Activated CD4-positive, alpha-beta memory T cell treated with anti-CD3 and anti-CD28 coated beads for 36 hours (primary cell): ENCODE measurements at regions of chr6 and their contacts with region 1.

Region 1: GRCh38 chr6:34248727-34249551 is at the start of gene SMIM29:
- DNase-seq: peak; percentile 98
- H3K4me3 Mint-ChIP-seq: peak within 1 kb of the TSS; percentile 92
- H3K27ac Mint-ChIP-seq: peak within 1 kb of the TSS; percentile 86
- H3K4me1 Mint-ChIP-seq: peaks cover 50% of the 10 kb centered on the region
- H3K27me3 Mint-ChIP-seq: no peaks in the 10 kb centered on the region
- total RNA-seq, gene SMIM29: 22.4 to 25.2 TPM

Region 2: GRCh38 chr6:34182751-34183531 is 66.0 kb before region 1 on chr6:
- CTCF ChIA-PET with region 1: no interaction called
- POLR2A ChIA-PET with region 1: interaction called, 5 read pairs
- intact Hi-C with region 1: loop called (anchors 5 kb)
- DNase-seq: peak; percentile 87
- H3K4me3 Mint-ChIP-seq: peak overlapping the region; percentile 65
- H3K27ac Mint-ChIP-seq: peak overlapping the region; percentile 81
- H3K4me1 Mint-ChIP-seq: peaks cover 16% of the 10 kb centered on the region
- H3K27me3 Mint-ChIP-seq: no peaks in the 10 kb centered on the region

Region 3: DNA sequence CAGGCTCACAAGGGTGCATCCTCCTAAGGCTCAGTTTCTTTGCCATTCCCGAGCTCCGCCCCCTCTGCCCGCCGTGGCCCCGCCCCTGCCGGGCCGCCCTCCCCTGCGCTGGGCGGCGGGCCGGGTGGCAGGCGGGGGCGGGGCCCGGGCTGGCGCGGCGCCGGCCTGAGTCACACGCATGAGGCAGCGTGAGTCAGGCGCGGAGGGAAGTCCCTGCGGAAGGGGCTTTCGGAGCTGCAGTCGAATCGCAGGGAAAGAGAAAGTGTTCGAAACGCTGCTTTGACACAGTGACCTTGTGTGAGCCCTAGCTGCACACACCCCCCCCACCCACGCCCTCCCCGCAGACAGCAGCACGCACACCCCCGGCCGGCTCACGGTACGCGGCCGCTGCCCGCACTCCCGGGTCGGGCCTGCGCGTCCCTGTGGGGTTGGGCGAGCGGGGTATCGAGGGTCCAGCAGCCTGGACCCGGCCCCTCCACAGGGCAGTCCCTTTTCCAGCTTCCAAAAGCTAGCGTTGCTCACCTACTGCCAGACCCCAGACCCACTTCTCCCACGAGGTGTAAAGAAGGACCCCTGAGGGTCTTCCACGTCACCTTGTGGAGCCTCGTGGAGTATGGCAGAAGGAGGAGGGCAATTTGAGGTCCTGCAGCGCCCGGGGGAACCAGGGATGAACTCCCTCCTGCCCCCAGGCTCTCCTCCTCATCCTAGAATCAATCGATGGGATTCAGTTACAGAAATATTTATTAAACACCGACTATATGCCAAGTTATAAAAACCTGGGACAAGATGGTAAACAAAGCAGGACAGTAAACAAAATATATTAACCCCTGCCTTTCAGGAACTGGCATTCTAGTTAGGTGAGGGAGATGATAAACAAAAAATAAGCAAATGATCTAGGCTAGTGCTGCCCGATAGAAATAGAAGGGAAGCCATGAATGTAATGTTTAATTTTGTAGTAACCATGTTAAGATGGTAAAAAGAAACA is 24.7 kb before region 1 on chr6:
- CTCF ChIA-PET with region 1: interaction called, 11 read pairs
- POLR2A ChIA-PET with region 1: interaction called, 10 read pairs
- intact Hi-C with region 1: loop called (anchors 2 kb)
- DNase-seq: peak; percentile 96
- H3K4me3 Mint-ChIP-seq: peak overlapping the region; percentile 52
- H3K27ac Mint-ChIP-seq: peak overlapping the region; percentile 72
- H3K4me1 Mint-ChIP-seq: peaks cover 35% of the 10 kb centered on the region
- H3K27me3 Mint-ChIP-seq: no peaks in the 10 kb centered on the region

Region 4: DNA sequence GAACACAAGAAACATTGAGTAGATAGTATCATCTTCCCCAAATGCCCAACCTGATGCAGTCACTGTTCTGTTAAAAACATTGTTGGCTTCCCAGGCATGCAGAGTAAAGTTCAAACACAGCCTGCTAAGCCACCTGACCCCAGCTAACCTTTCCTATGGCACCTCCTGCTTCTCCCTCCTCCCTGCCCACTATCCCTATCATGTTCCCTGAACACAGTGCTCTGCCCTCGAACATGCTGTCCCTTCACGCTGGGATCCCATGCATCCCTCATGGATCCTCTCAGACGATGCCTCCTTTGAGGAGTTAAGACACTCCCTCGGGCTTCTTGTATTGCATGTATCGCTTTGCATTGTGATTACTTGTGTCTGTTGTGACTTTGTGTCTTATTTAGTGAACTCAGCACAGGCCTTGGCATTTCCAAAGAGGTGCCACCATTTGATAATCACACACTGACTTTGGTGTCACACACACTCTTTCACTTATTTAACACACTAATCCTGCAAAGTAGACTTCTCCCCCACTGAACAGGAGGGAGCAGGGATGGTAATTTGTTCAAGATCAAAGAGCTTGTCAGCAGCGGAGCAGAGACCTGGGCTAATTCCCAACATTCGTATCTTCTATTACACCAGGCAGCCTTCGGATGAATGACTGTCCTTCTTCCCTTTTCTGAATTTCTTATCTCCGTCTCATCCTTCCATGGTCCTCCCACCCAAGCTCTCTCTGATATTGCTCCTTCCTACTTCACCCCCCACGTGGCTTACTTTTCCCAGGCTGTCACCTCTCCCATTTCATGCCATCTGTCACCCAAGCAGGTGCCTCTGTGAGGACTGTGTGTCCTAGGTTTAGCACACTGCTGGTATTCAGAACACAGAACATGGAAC is 28.2 kb after region 1 on chr6:
- CTCF ChIA-PET with region 1: interaction called, 10 read pairs
- POLR2A ChIA-PET with region 1: no interaction called
- intact Hi-C with region 1: no loop called
- DNase-seq: no peak
- H3K4me3 Mint-ChIP-seq: no peak overlapping the region
- H3K27ac Mint-ChIP-seq: no peak overlapping the region
- H3K4me1 Mint-ChIP-seq: peaks cover 2% of the 10 kb centered on the region
- H3K27me3 Mint-ChIP-seq: no peaks in the 10 kb centered on the region

Region 5: GRCh38 chr6:34414999-34415858 is 166.3 kb after region 1 on chr6:
- CTCF ChIA-PET with region 1: interaction called, 40 read pairs
- POLR2A ChIA-PET with region 1: interaction called, 3 read pairs
- intact Hi-C with region 1: loop called (anchors 1 kb)
- DNase-seq: peak; percentile 35
- H3K4me3 Mint-ChIP-seq: no peak overlapping the region
- H3K27ac Mint-ChIP-seq: peak overlapping the region; percentile 8
- H3K4me1 Mint-ChIP-seq: peaks cover 12% of the 10 kb centered on the region
- H3K27me3 Mint-ChIP-seq: no peaks in the 10 kb centered on the region

Region 6: GRCh38 chr6:34459899-34460593 is 211.1 kb after region 1 on chr6:
- CTCF ChIA-PET with region 1: interaction called, 12 read pairs
- POLR2A ChIA-PET with region 1: no interaction called
- intact Hi-C with region 1: no loop called
- DNase-seq: peak; percentile 59
- H3K4me3 Mint-ChIP-seq: no peak overlapping the region
- H3K27ac Mint-ChIP-seq: no peak overlapping the region
- H3K4me1 Mint-ChIP-seq: no peaks in the 10 kb centered on the region
- H3K27me3 Mint-ChIP-seq: peaks cover 9% of the 10 kb centered on the region